ENCODE measurements at regions of chr6 and their contacts with region 1.

Region 1: DNA sequence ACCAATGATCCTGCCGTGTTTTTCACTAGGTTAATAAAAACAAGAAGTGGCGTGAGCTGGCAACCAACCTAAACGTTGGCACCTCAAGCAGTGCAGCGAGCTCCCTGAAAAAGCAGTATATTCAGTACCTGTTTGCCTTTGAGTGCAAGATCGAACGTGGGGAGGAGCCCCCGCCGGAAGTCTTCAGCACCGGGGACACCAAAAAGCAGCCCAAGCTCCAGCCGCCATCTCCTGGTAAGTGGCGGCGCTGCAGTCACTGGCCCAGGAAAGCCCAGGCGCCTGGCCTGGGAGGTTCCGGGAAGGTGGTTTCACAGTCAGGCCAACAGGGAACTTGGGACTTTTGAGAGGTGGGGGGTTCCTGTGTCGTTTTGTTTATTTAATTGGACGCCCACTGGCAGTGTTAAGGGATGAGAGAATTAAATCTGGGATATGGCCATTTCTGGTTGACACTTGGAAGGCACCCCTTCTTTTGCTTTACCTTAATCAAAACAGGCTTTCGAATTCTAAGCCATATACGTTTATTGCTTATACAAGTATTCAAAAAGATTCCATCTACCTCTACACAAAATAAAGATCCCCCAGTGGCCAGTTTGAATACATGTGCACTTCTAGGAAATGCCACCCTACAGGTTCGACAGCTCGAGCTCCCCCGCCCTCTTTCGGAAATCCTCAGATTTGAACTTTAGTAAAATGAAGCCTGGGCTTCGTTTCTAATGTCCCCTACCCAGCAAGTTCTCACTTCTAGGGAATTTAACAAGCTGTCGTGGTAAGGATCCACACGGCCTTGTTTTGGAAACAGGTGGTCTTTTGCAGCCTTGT is 138.9 kb downstream of the TMEM242 start:
- DNase-seq: peak; percentile 65 to 93 (median 80)

Region 2: GRCh38 chr6:157034436-157035230 is 149.8 kb before region 1 on chr6:
- intact Hi-C with region 1: loop called (anchors 5 kb)
- DNase-seq: no peak

Region 3: GRCh38 chr6:157274471-157275226 is 90.2 kb after region 1 on chr6:
- intact Hi-C with region 1: no loop called
- DNase-seq: peak; percentile 17 to 87 (median 74)

Measured in head of caudate nucleus (tissue), 42 donors.